IMR-90 (cell line): ENCODE measurements at regions of chr17 and their contacts with region 1.

Region 1: GRCh38 chr17:72539981-72540897 is 419.4 kb downstream of the SOX9 start:
- DNase-seq: peak; percentile 61
- ATAC-seq: peak; percentile 98
- H3K4me3 ChIP-seq: peak overlapping the region; percentile 10; the same call in 1 of the 2 replicates
- H3K27ac ChIP-seq: peak overlapping the region; percentile 87
- H3K4me1 ChIP-seq: peaks cover 3% of the 10 kb centered on the region; the same call in 1 of the 2 replicates
- H3K27me3 ChIP-seq: no peaks in the 10 kb centered on the region
- CTCF ChIP-seq: peak; percentile 90
- POLR2A ChIP-seq: no peak; the same call in 1 of the 2 replicates
- RAD21 ChIP-seq: peak; percentile 95

Region 2: DNA sequence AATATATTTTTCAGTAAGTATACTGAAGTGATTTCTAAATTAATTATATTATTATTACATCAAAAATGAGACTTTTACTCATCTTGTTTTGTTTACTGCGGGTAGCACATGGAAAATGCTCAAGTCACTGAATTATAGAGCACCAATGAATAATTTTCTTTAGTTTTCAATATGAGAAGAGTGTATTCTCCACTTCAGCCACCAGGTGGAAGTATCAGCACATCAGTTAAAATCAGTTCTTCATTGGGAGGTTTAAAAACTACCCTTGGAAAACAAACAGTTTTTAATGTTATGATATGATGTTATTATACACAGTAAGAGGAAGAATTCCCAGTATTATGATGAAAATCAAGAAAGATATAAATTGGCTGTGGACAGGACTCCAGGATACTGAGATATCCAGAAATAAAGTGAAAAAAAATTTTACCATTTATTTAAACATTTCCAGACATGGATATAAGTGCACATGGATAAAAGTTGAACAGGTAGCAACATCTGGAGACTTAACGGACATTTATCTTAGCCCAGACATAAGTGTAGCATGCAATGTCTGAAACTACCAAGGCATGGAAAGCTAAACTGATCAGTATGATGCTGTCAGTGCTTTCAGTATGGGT is 1903.6 kb before region 1 on chr17:
- CTCF ChIA-PET with region 1: no interaction called
- POLR2A ChIA-PET with region 1: no interaction called
- dilution Hi-C with region 1: no loop called
- in situ Hi-C with region 1: loop called (anchors 5 kb)
- intact Hi-C with region 1: loop called (anchors 1 kb)
- DNase-seq: peak; percentile 46
- ATAC-seq: peak; percentile 70
- H3K4me3 ChIP-seq: no peak overlapping the region
- H3K27ac ChIP-seq: no peak overlapping the region
- H3K4me1 ChIP-seq: no peaks in the 10 kb centered on the region
- H3K27me3 ChIP-seq: peaks cover 7% of the 10 kb centered on the region; the same call in 1 of the 2 replicates
- CTCF ChIP-seq: peak; percentile 73
- POLR2A ChIP-seq: no peak
- RAD21 ChIP-seq: peak; percentile 79

Region 3: DNA sequence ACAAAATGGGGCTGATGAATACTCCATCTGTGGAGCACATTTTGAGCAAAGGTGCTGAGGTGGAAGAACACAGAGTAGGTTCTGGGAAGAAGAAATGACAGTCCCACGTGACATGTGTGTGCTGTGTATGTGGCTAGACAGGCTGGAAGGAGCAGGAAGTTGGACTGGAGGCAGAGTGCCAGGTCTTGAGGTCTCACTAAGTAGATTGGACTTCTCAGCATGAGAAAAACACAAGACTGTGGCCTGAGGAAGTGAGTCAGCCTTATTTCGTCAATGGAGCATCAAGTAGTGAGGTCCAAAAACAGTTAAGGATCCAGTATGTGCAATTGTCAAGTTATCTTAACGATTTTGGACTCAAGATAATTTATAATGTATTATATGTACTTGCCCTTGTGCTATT is 1634.4 kb before region 1 on chr17:
- CTCF ChIA-PET with region 1: no interaction called
- POLR2A ChIA-PET with region 1: no interaction called
- dilution Hi-C with region 1: no loop called
- in situ Hi-C with region 1: no loop called
- intact Hi-C with region 1: loop called (anchors 5 kb)
- DNase-seq: peak; percentile 100
- ATAC-seq: peak; percentile 93
- H3K4me3 ChIP-seq: no peak overlapping the region
- H3K27ac ChIP-seq: peak overlapping the region; percentile 61
- H3K4me1 ChIP-seq: peaks cover 3% of the 10 kb centered on the region; the same call in 1 of the 2 replicates
- H3K27me3 ChIP-seq: no peaks in the 10 kb centered on the region
- CTCF ChIP-seq: no peak
- POLR2A ChIP-seq: no peak
- RAD21 ChIP-seq: 0 out of 2 replicates have a peak, but pooled peaks have one; percentile 4

Region 4: DNA sequence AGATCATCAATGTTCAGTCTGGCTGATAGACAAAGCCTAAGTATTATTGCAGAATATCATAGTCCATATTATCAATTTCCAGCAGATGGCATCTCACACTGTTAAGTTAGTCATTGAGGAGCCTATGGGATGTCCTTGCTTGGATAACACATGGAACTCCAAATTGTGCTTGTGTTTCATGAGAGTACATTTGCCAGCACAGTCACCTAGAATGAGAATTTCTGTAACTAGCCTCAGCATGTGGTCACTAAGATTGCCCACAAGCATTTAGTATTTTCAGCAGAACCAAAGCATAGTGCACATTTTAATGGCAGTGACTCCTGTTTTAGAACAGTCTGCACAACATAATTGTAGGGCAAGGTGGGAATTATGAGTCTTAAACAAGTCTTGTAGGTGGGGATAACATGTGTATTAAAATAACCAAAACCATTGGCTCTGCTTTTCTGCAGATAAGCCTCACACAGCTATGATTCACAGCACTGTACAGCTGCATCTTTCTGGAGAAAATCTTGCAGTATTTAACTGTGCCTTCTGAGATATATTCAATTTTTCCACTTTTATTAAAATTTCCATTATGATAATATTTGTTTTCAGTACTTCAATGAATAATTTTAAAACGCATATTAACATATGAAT is 1302.2 kb before region 1 on chr17:
- CTCF ChIA-PET with region 1: no interaction called
- POLR2A ChIA-PET with region 1: no interaction called
- dilution Hi-C with region 1: no loop called
- in situ Hi-C with region 1: loop called (anchors 25 kb)
- intact Hi-C with region 1: loop called (anchors 1 kb)
- DNase-seq: peak; percentile 53
- ATAC-seq: peak; percentile 83
- H3K4me3 ChIP-seq: no peak overlapping the region
- H3K27ac ChIP-seq: no peak overlapping the region
- H3K4me1 ChIP-seq: peaks cover 2% of the 10 kb centered on the region; the same call in 1 of the 2 replicates
- H3K27me3 ChIP-seq: no peaks in the 10 kb centered on the region
- CTCF ChIP-seq: peak; percentile 48
- POLR2A ChIP-seq: no peak
- RAD21 ChIP-seq: peak; percentile 70

Region 5: GRCh38 chr17:71633391-71633849 is 906.8 kb before region 1 on chr17:
- CTCF ChIA-PET with region 1: no interaction called
- POLR2A ChIA-PET with region 1: no interaction called
- dilution Hi-C with region 1: no loop called
- in situ Hi-C with region 1: loop called (anchors 25 kb)
- intact Hi-C with region 1: no loop called
- DNase-seq: peak; percentile 92
- ATAC-seq: peak; percentile 82
- H3K4me3 ChIP-seq: peak overlapping the region; percentile 9; the same call in 1 of the 2 replicates
- H3K27ac ChIP-seq: peak overlapping the region; percentile 79
- H3K4me1 ChIP-seq: peaks cover 8% of the 10 kb centered on the region
- H3K27me3 ChIP-seq: no peaks in the 10 kb centered on the region
- CTCF ChIP-seq: no peak
- POLR2A ChIP-seq: no peak
- RAD21 ChIP-seq: no peak

Region 6: DNA sequence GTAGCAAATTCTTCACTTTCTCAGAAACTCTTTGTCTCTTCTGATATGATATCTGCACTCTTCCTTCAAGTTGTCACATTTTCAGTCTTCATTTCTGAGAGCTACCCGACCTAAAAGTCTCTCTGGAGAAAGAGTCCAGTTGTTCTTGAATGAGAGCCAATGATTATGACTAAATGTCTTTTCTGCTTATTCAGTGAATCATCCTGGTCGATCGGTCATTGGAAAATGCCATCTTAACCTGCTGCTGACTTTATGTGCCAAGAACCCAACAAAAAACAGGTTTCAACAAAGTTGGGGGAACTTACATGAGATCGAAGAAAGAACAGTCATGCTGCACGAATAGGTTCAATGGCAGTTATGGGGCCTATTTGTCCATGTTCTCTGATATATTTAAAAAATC is 403.5 kb before region 1 on chr17:
- CTCF ChIA-PET with region 1: no interaction called
- POLR2A ChIA-PET with region 1: no interaction called
- dilution Hi-C with region 1: no loop called
- in situ Hi-C with region 1: loop called (anchors 5 kb)
- intact Hi-C with region 1: no loop called
- DNase-seq: peak; percentile 85
- ATAC-seq: no peak
- H3K4me3 ChIP-seq: no peak overlapping the region
- H3K27ac ChIP-seq: no peak overlapping the region
- H3K4me1 ChIP-seq: peaks cover 20% of the 10 kb centered on the region
- H3K27me3 ChIP-seq: no peaks in the 10 kb centered on the region
- CTCF ChIP-seq: no peak
- POLR2A ChIP-seq: no peak
- RAD21 ChIP-seq: no peak